Cardiac septum (tissue), 1 donor: ENCODE measurements at regions of chr19 and their contacts with region 1.

Region 1: GRCh38 chr19:45245334-45245787 is at the start of gene EXOC3L2:
- DNase-seq: no peak
- total RNA-seq, gene EXOC3L2: 1.7 TPM

Region 2: DNA sequence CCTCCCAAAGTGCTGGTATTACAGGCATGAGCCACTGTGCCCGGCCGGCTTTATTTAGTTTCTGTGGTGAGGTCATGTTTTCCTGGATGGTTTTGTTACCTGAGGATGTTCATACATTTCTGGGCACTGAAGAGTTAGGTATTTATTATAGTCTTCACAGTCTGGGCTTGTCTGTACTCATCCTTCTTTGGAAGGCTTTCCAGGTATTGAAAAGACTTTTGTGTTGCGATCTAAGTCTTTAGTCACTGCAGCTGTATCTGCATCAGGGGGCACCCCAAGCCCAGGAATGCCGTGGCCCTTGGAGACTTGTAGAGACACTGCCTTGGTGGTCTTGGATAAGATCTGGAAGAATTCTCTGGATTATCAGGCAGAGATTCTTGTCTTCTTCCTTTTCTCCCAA is 54.0 kb before region 1 on chr19:
- intact Hi-C with region 1: no loop called
- DNase-seq: no peak

Region 3: DNA sequence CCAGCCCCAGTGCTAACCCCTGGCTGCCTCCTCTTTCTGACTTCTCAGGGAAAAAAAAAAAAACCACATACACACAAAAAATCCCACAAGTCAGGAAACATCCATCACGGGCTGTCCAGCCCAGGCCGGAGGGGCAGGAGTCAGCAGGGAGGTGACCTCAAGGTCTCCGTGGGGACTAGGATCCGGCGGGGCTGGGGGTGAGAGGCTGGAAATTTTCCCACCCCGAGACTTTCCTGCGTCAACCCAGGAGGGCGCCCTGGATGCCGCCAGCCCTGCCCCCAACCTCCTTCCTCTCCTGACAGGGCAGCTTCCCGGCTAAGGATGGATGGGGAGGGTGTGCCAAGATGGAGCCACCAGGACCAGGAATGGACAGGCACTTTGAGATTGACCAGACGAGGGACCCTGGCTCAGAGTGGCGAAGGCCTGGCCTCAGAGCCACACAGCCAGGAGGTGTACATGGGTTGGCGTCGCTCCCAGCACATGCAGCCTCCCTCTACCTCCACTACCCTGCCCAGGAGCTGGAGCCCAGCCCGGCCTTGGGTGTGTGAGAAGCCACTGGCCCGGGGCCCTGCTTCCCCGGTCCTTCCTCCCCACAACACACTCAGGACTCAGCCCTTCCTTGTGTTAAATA is 33.5 kb before region 1 on chr19:
- intact Hi-C with region 1: loop called (anchors 2 kb)
- DNase-seq: no peak